Posterior cingulate gyrus (tissue), 11 donors: ENCODE measurements at regions of chr10 and their contacts with region 1.

Region 1: DNA sequence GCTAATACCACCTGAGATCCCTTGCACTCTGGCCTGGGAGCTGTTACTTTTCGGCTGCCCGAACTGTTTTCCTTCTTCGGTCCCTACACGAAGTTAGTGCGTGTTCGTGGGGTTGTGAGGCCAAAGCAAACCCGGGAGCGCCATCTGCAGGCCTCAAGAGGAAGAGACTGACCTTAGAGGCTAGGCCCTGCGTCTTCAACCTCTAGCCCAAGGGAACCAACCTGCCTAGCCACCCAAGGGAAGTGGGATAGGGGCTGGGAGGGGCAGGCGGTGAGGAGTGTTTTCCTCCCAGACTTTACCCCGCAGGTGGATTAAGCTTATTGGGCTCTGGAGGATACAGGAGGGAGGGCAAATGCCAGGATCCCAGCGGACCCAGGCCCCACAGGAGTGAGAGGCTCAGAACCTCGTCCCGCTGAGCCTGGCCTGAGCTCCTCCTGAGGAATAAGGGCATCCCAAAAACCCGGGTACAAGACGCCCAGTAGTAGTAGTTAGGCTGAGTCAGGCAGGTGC is 1.7 kb upstream of the PAX2 start:
- DNase-seq: peak in 4 of 10 donors; percentile 14 to 87 (median 47)

Region 2: GRCh38 chr10:100562008-100562711 is 181.5 kb before region 1 on chr10:
- intact Hi-C with region 1: loop called (anchors 5 kb)
- DNase-seq: peak; percentile 46 to 97 (median 70)

Region 3: GRCh38 chr10:100878291-100878910 is 134.7 kb after region 1 on chr10:
- intact Hi-C with region 1: loop called (anchors 10 kb)
- DNase-seq: peak; percentile 51 to 95 (median 68)